GM23248 (cell line): ENCODE measurements at regions of chr17 and their contacts with region 1.

Region 1: GRCh38 chr17:64025732-64026294 is 5.4 kb upstream of the ICAM2 start:
- DNase-seq: peak; percentile 78
- H3K4me3 ChIP-seq: peak overlapping the region; percentile 35; the same call in 1 of the 2 replicates
- H3K27ac ChIP-seq: no peak overlapping the region
- H3K4me1 ChIP-seq: no peaks in the 10 kb centered on the region
- H3K27me3 ChIP-seq: no peaks in the 10 kb centered on the region

Region 2: DNA sequence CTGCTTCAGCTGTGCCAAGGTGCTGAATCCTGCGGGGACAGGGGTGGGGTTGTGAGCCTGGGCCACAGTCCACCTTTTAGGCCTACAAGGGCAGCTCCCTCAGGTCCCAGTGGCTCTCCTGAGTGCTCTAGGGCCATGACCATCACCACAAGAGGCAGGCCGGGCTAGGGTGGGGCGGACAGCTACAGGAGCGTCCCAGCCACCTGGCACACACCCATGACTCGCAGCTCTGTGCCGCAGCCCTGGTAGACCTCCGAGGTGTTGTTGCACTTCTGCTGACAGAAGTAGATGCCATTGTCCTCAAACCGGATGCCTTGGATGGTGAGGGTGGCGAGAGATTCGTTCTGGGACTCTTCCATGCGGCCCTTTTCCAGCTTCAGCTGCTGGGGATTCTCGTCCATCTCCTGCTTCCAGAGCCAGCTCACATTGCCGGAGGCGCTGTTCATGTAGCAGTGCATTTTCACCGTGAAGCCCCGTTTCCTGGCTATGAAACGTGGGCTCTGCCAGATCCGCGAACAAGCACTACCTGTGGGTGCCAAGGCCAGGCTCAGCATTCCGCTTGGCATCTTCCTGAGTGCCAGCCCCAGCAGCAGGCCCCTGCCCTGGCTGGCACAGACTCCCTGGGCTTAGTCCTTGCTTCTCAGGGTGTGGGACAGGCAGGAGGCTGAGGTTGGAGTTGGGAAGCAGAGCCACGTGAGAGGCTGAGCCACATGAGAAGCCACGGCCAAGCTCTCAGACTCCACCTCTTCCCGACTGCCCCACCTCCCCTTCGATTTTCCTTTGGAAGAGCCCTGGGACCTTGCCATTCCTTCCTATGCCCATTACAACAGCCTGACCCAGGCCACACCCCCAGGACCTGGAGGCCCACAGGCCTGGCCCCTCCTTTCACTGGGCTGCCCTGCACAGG is 95.7 kb before region 1 on chr17:
- in situ Hi-C with region 1: loop called (anchors 10 kb)
- DNase-seq: no peak
- H3K4me3 ChIP-seq: no peak overlapping the region
- H3K27ac ChIP-seq: no peak overlapping the region
- H3K4me1 ChIP-seq: no peaks in the 10 kb centered on the region
- H3K27me3 ChIP-seq: peaks cover 7% of the 10 kb centered on the region; the same call in 1 of the 2 replicates